ENCODE measurements at regions of chr1 and their contacts with region 1.

Region 1: GRCh38 chr1:165933446-165934178 is 106.2 kb downstream of the UCK2 start:
- DNase-seq: no peak
- H3K4me3 ChIP-seq: no peak overlapping the region
- H3K27ac ChIP-seq: no peak overlapping the region
- H3K4me1 ChIP-seq: no peaks in the 10 kb centered on the region
- H3K27me3 ChIP-seq: no peaks in the 10 kb centered on the region
- CTCF ChIP-seq: no peak
- EP300 ChIP-seq: no peak
- POLR2A ChIP-seq: no peak

Region 2: GRCh38 chr1:167059045-167059808 is 1125.6 kb after region 1 on chr1:
- intact Hi-C with region 1: loop called in 1 of 4 experiments (anchors 10 kb)
- DNase-seq: peak; percentile 38 to 78 (median 66)
- H3K4me3 ChIP-seq: no peak overlapping the region
- H3K27ac ChIP-seq: no peak overlapping the region
- H3K4me1 ChIP-seq: no peaks in the 10 kb centered on the region
- H3K27me3 ChIP-seq: no peaks in the 10 kb centered on the region
- CTCF ChIP-seq: peak; percentile 52 to 67 (median 55)
- EP300 ChIP-seq: no peak
- POLR2A ChIP-seq: no peak